Mammary epithelial cell (primary cell): ENCODE measurements at regions of chr4 and their contacts with region 1.

Region 1: GRCh38 chr4:6974138-6974848 is 64.7 kb downstream of the TBC1D14 start:
- DNase-seq: peak; percentile 76
- H3K4me3 ChIP-seq: no peak overlapping the region
- H3K27ac ChIP-seq: no peak overlapping the region
- H3K4me1 ChIP-seq: no peaks in the 10 kb centered on the region
- H3K27me3 ChIP-seq: no peaks in the 10 kb centered on the region
- CTCF ChIP-seq: peak; percentile 99

Region 2: GRCh38 chr4:6942238-6942800 is 32.0 kb before region 1 on chr4:
- CTCF ChIA-PET with region 1: no interaction called
- dilution Hi-C with region 1: no loop called
- in situ Hi-C with region 1: no loop called
- intact Hi-C with region 1: loop called (anchors 1 kb)
- DNase-seq: peak; percentile 90
- H3K4me3 ChIP-seq: peak overlapping the region in 1 of 3 experiments; percentile 9
- H3K27ac ChIP-seq: peak overlapping the region; percentile 75
- H3K4me1 ChIP-seq: peaks cover 28% of the 10 kb centered on the region
- H3K27me3 ChIP-seq: no peaks in the 10 kb centered on the region
- CTCF ChIP-seq: no peak

Region 3: GRCh38 chr4:7042697-7043464 is 68.6 kb after region 1 on chr4 and contains the start of gene TADA2B:
- CTCF ChIA-PET with region 1: interaction called, 12 read pairs
- dilution Hi-C with region 1: no loop called
- in situ Hi-C with region 1: no loop called
- intact Hi-C with region 1: loop called (anchors 1 kb)
- DNase-seq: peak; percentile 98
- H3K4me3 ChIP-seq: peak within 1 kb of the TSS; percentile 92 to 98 (median 93)
- H3K27ac ChIP-seq: peak within 1 kb of the TSS; percentile 87
- H3K4me1 ChIP-seq: peaks cover 20% of the 10 kb centered on the region
- H3K27me3 ChIP-seq: no peaks in the 10 kb centered on the region
- CTCF ChIP-seq: peak; percentile 23 to 31
- total RNA-seq, gene TADA2B: 13.3 to 17.2 TPM

Region 4: GRCh38 chr4:7186061-7186461 is 211.8 kb after region 1 on chr4:
- CTCF ChIA-PET with region 1: no interaction called
- dilution Hi-C with region 1: no loop called
- in situ Hi-C with region 1: no loop called
- intact Hi-C with region 1: loop called (anchors 10 kb)
- DNase-seq: no peak
- H3K4me3 ChIP-seq: no peak overlapping the region
- H3K27ac ChIP-seq: no peak overlapping the region
- H3K4me1 ChIP-seq: no peaks in the 10 kb centered on the region
- H3K27me3 ChIP-seq: no peaks in the 10 kb centered on the region
- CTCF ChIP-seq: peak in 1 of 2 donors; percentile 46